HepG2 (cell line): ENCODE measurements at regions of chr6 and their contacts with region 1.

Region 1: DNA sequence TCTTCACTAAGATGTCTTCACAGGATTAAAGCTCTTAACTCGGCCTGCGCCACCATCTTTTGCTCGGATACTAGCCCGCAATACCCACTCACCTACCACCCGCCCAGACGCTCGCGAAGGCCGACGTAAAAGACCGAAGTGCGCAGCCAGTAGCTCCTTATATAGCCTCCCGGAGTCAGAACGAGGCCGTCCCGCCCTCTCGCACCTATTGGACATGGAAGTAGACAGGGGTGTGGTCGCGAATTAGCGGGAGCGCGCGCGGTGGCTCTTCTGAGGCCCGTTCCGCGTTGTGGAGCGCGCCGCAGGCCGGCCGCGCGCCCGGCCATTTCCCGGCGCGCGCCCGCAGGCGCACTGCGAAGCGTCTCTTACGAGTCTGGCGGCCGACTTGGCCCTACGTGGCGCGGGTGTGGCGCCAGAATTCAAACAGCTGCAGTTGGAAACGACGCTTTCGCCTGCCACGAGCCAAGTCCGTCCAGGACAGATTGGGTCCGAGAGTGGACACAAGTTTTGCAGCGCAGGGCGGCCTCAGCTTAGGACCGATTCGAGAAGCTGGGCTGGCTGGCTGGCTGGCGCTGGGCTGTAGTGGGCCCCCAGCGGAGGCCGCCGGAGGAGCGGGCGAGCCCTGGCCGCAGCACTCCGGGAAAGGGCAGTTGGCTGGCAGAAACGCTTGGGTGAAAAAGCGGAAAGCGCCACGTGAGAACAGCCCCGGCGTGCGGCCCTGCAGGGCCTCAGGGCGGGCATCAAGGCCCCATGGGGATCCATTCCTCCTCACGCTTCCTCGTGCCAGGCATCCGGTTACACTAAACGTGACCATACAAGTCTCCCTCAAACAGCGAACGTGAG is 36.1 kb upstream of the SYNCRIP start:
- DNase-seq: peak; percentile 96
- ATAC-seq: peak; percentile 80
- H3K4me3 ChIP-seq: peak overlapping the region; percentile 92 to 97 (median 93)
- H3K27ac ChIP-seq: peak overlapping the region; percentile 97
- H3K4me1 ChIP-seq: peaks cover 34% of the 10 kb centered on the region
- H3K27me3 ChIP-seq: no peaks in the 10 kb centered on the region; a peak in 1 of 5 replicates
- CTCF ChIP-seq: 0 out of 2 replicates have a peak, but pooled peaks have one; percentile 14
- EP300 ChIP-seq: peak in 1 of 2 experiments; percentile 19; a peak in 2 of 4 replicates
- POLR2A ChIP-seq: peak; percentile 100
- RAD21 ChIP-seq: peak; percentile 63

Region 2: GRCh38 chr6:85449818-85450759 is 228.7 kb before region 1 on chr6 and contains the start of gene NT5E:
- CTCF ChIA-PET with region 1: no interaction called
- POLR2A ChIA-PET with region 1: interaction called, 16 read pairs
- in situ Hi-C with region 1: no loop called
- intact Hi-C with region 1: no loop called
- DNase-seq: peak; percentile 24
- ATAC-seq: peak; percentile 79
- H3K4me3 ChIP-seq: peak within 1 kb of the TSS; percentile 76 to 88 (median 79)
- H3K27ac ChIP-seq: peak within 1 kb of the TSS; percentile 84
- H3K4me1 ChIP-seq: peaks cover 69% of the 10 kb centered on the region
- H3K27me3 ChIP-seq: no peaks in the 10 kb centered on the region; a peak in 1 of 5 replicates
- CTCF ChIP-seq: peak; percentile 38; the same call in 1 of the 2 replicates
- EP300 ChIP-seq: 0 out of 4 replicates have a peak, but pooled peaks of 1 of the 2 experiments have one; percentile 11
- POLR2A ChIP-seq: peak; percentile 49 to 83; a peak in 3 of 4 replicates
- RAD21 ChIP-seq: 0 out of 2 replicates have a peak, but pooled peaks have one; percentile 20
- total RNA-seq, gene NT5E: 6.4 and 9.5 TPM in 2 replicates

Region 3: GRCh38 chr6:85593438-85594196 is 85.2 kb before region 1 on chr6 and contains the start of gene SNX14:
- CTCF ChIA-PET with region 1: no interaction called
- POLR2A ChIA-PET with region 1: interaction called, 44 read pairs
- in situ Hi-C with region 1: no loop called
- intact Hi-C with region 1: loop called (anchors 5 kb)
- DNase-seq: peak; percentile 89
- ATAC-seq: peak; percentile 93
- H3K4me3 ChIP-seq: peak within 1 kb of the TSS; percentile 70 to 89 (median 80)
- H3K27ac ChIP-seq: peak within 1 kb of the TSS; percentile 95
- H3K4me1 ChIP-seq: peaks cover 34% of the 10 kb centered on the region
- H3K27me3 ChIP-seq: peaks cover 0 to 4% of the 10 kb centered on the region in 2 experiments; a peak in 1 of 5 replicates
- CTCF ChIP-seq: peak; percentile 41
- EP300 ChIP-seq: 0 out of 4 replicates have a peak, but pooled peaks of 1 of the 2 experiments have one; percentile 9
- POLR2A ChIP-seq: peak in 1 of 2 experiments; percentile 86; a peak in 3 of 4 replicates
- RAD21 ChIP-seq: peak; percentile 17
- total RNA-seq, gene SNX14: 61.9 and 112 TPM in 2 replicates

Region 4: DNA sequence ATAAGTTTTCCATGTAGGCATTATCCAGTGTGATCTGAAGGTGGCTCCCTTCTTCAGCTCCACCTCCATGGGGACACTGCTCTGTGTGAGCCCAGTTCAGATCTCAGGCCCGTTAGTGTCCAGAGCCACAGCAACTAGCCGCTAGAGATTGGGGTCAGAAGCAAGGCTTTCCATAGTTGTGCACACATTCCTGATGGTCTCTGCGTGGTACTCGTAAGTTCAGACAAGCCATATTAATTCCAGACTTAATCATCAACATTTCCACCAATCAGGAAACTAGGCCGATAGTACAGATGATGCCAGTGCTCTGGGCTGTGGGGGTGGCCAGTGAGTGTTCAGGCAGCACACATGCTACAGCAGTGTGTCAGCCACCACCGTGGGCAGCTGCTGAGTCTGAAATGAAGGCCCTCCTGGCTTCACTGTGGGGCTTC is 18.6 kb before region 1 on chr6:
- CTCF ChIA-PET with region 1: no interaction called
- POLR2A ChIA-PET with region 1: interaction called, 14 read pairs
- in situ Hi-C with region 1: no loop called
- intact Hi-C with region 1: loop called (anchors 1 kb)
- DNase-seq: peak; percentile 59
- ATAC-seq: peak; percentile 99
- H3K4me3 ChIP-seq: peak overlapping the region; percentile 11 to 60 (median 35); a peak in 5 of 6 replicates
- H3K27ac ChIP-seq: no peak overlapping the region
- H3K4me1 ChIP-seq: peaks cover 4% of the 10 kb centered on the region; the same call in 1 of the 2 replicates
- H3K27me3 ChIP-seq: no peaks in the 10 kb centered on the region
- CTCF ChIP-seq: peak; percentile 77
- EP300 ChIP-seq: no peak
- POLR2A ChIP-seq: no peak
- RAD21 ChIP-seq: no peak

Region 5: GRCh38 chr6:85865420-85866369 is 186.9 kb after region 1 on chr6:
- CTCF ChIA-PET with region 1: no interaction called
- POLR2A ChIA-PET with region 1: no interaction called
- in situ Hi-C with region 1: no loop called
- intact Hi-C with region 1: loop called (anchors 10 kb)
- DNase-seq: peak; percentile 74
- ATAC-seq: peak; percentile 71
- H3K4me3 ChIP-seq: peak overlapping the region; percentile 54 to 63 (median 61)
- H3K27ac ChIP-seq: no peak overlapping the region
- H3K4me1 ChIP-seq: peaks cover 32% of the 10 kb centered on the region
- H3K27me3 ChIP-seq: no peaks in the 10 kb centered on the region
- CTCF ChIP-seq: no peak
- EP300 ChIP-seq: no peak
- POLR2A ChIP-seq: no peak
- RAD21 ChIP-seq: no peak